B cell (primary cell): ENCODE measurements at regions of chr12 and their contacts with region 1.

Region 1: GRCh38 chr12:53379389-53380103 is 430 bp upstream of the SP1 start:
- DNase-seq: peak; percentile 99
- ATAC-seq: peak; percentile 70
- H3K4me3 ChIP-seq: peak overlapping the region; percentile 60 to 93 (median 64)
- H3K4me3 Mint-ChIP-seq: no peak overlapping the region
- H3K27ac ChIP-seq: peak overlapping the region; percentile 76 to 89
- H3K27ac Mint-ChIP-seq: no peak overlapping the region
- H3K4me1 ChIP-seq: peaks cover 39 to 46% of the 10 kb centered on the region in 2 donors
- H3K4me1 Mint-ChIP-seq: peaks cover 33% of the 10 kb centered on the region
- H3K27me3 ChIP-seq: no peaks in the 10 kb centered on the region
- H3K27me3 Mint-ChIP-seq: no peaks in the 10 kb centered on the region
- CTCF ChIP-seq: no peak

Region 2: DNA sequence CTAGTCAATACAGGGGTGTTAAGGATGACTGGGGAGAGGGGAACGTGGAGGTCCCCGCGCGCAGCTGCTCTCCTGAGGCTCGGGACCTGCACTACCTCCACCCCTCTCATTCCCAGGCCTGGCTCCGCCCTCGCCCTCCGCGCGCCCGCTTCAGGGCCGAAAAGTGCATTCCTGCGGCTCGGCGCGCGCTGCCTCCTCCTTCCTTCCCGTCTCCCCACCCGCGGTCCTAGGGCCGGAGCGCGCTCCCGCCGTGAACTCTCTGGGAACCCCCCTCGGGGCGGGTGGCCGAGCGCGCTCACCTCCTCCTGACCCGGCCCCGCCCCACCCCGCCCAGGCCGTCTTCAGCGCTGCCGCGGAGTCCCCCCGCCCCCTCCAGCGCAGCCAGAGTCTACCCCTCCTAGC is 158.7 kb before region 1 on chr12:
- CTCF ChIA-PET with region 1: no interaction called
- POLR2A ChIA-PET with region 1: interaction called, 6 read pairs
- intact Hi-C with region 1: loop called (anchors 2 kb)
- DNase-seq: peak; percentile 92
- ATAC-seq: peak; percentile 76
- H3K4me3 ChIP-seq: peak overlapping the region; percentile 63 to 100 (median 90)
- H3K4me3 Mint-ChIP-seq: peak overlapping the region; percentile 97
- H3K27ac ChIP-seq: peak overlapping the region; percentile 93 to 95
- H3K27ac Mint-ChIP-seq: peak overlapping the region; percentile 98
- H3K4me1 ChIP-seq: peaks cover 39 to 56% of the 10 kb centered on the region in 2 donors
- H3K4me1 Mint-ChIP-seq: peaks cover 53% of the 10 kb centered on the region
- H3K27me3 ChIP-seq: no peaks in the 10 kb centered on the region
- H3K27me3 Mint-ChIP-seq: no peaks in the 10 kb centered on the region
- CTCF ChIP-seq: no peak

Region 3: GRCh38 chr12:53365245-53365904 is 14.2 kb before region 1 on chr12:
- CTCF ChIA-PET with region 1: interaction called, 6 read pairs
- POLR2A ChIA-PET with region 1: interaction called, 11 read pairs
- intact Hi-C with region 1: no loop called
- DNase-seq: no peak
- ATAC-seq: no peak
- H3K4me3 ChIP-seq: no peak overlapping the region
- H3K4me3 Mint-ChIP-seq: peak overlapping the region; percentile 75
- H3K27ac ChIP-seq: peak overlapping the region in 1 of 2 donors; percentile 28
- H3K27ac Mint-ChIP-seq: peak overlapping the region; percentile 84
- H3K4me1 ChIP-seq: peaks cover 12 to 17% of the 10 kb centered on the region in 2 donors
- H3K4me1 Mint-ChIP-seq: peaks cover 13% of the 10 kb centered on the region
- H3K27me3 ChIP-seq: no peaks in the 10 kb centered on the region
- H3K27me3 Mint-ChIP-seq: no peaks in the 10 kb centered on the region
- CTCF ChIP-seq: no peak

Region 4: DNA sequence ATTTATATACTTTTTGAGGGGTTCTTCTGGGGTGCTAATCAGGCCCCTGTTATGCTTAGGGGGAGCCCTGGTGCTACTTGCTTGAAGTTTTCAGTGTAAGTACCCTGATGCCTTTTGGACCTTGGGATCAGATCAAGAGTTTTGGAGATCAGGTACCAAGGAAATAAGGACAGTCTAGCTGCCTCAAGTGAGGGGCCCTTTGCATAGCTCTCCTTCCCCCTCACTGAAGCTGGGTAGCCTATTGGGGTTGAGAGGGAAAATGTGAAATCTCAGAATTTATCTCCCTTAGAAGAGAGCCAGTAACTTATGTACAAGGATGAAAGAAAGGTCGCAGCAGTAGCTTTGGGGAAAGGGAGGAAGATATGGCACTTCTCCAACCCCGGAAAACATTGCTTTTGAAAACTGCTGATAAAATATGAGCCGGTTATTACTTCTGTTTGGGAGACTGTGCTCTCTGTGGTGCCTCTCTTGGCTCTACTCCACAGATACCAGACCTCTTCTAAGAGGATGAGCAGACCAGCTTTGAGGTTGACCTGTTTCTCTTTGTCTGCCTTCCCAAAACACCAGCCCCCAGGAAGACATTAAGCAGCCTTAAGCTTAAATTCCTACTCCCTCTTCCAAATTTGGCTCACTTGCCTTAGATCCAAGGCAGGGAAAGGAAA is 35.3 kb after region 1 on chr12:
- CTCF ChIA-PET with region 1: interaction called, 10 read pairs
- POLR2A ChIA-PET with region 1: no interaction called
- intact Hi-C with region 1: loop called (anchors 1 kb)
- DNase-seq: no peak
- ATAC-seq: no peak
- H3K4me3 ChIP-seq: no peak overlapping the region
- H3K4me3 Mint-ChIP-seq: no peak overlapping the region
- H3K27ac ChIP-seq: no peak overlapping the region
- H3K27ac Mint-ChIP-seq: peak overlapping the region; percentile 46
- H3K4me1 ChIP-seq: peaks cover 24 to 29% of the 10 kb centered on the region in 2 donors
- H3K4me1 Mint-ChIP-seq: peaks cover 57% of the 10 kb centered on the region
- H3K27me3 ChIP-seq: no peaks in the 10 kb centered on the region
- H3K27me3 Mint-ChIP-seq: no peaks in the 10 kb centered on the region
- CTCF ChIP-seq: no peak

Region 5: GRCh38 chr12:53441040-53441833 is 61.7 kb after region 1 on chr12 and contains the start of gene PRR13:
- CTCF ChIA-PET with region 1: interaction called, 3 read pairs
- POLR2A ChIA-PET with region 1: interaction called, 3 read pairs
- intact Hi-C with region 1: loop called (anchors 2 kb)
- DNase-seq: peak; percentile 98
- ATAC-seq: peak; percentile 97
- H3K4me3 ChIP-seq: peak within 1 kb of the TSS; percentile 85 to 99 (median 94)
- H3K4me3 Mint-ChIP-seq: peak within 1 kb of the TSS; percentile 97
- H3K27ac ChIP-seq: peak within 1 kb of the TSS; percentile 62 to 93
- H3K27ac Mint-ChIP-seq: peak within 1 kb of the TSS; percentile 99
- H3K4me1 ChIP-seq: peaks cover 21 to 25% of the 10 kb centered on the region in 2 donors
- H3K4me1 Mint-ChIP-seq: peaks cover 40% of the 10 kb centered on the region
- H3K27me3 ChIP-seq: no peaks in the 10 kb centered on the region
- H3K27me3 Mint-ChIP-seq: no peaks in the 10 kb centered on the region
- CTCF ChIP-seq: no peak
- total RNA-seq, gene PRR13: 200 and 213 TPM in 2 replicates

Region 6: DNA sequence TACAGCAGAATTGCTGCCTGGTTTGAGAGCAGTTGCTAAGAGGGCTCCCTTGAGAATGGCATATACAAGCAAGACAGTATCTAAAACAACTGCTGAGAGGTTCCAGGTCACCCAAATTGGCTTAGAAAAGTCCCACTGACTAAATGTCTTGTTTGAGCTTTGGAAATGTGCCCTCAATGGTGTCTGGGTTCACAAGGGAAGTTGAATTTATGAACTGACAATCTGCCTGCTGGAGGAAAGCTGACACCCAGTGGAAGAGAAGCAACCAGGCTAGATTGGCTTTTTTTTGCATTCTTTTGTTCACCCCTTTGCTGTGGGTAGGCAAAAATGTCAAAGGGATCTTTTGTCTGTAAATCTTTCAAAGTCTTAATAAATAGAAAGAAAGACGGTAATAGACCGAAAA is 172.3 kb after region 1 on chr12:
- CTCF ChIA-PET with region 1: no interaction called
- POLR2A ChIA-PET with region 1: no interaction called
- intact Hi-C with region 1: no loop called
- DNase-seq: no peak
- ATAC-seq: no peak
- H3K4me3 ChIP-seq: no peak overlapping the region
- H3K4me3 Mint-ChIP-seq: no peak overlapping the region
- H3K27ac ChIP-seq: no peak overlapping the region
- H3K27ac Mint-ChIP-seq: no peak overlapping the region
- H3K4me1 ChIP-seq: no peaks in the 10 kb centered on the region
- H3K4me1 Mint-ChIP-seq: no peaks in the 10 kb centered on the region
- H3K27me3 ChIP-seq: no peaks in the 10 kb centered on the region
- H3K27me3 Mint-ChIP-seq: no peaks in the 10 kb centered on the region
- CTCF ChIP-seq: no peak

Region 7: GRCh38 chr12:53625946-53626701 is 246.6 kb after region 1 on chr12 and contains the start of gene ATF7:
- CTCF ChIA-PET with region 1: no interaction called
- POLR2A ChIA-PET with region 1: interaction called, 3 read pairs
- intact Hi-C with region 1: loop called (anchors 2 kb)
- DNase-seq: peak; percentile 99
- ATAC-seq: peak; percentile 93
- H3K4me3 ChIP-seq: peak within 1 kb of the TSS; percentile 60 to 91 (median 74)
- H3K4me3 Mint-ChIP-seq: peak within 1 kb of the TSS; percentile 91
- H3K27ac ChIP-seq: peak within 1 kb of the TSS; percentile 77 to 88
- H3K27ac Mint-ChIP-seq: peak within 1 kb of the TSS; percentile 98
- H3K4me1 ChIP-seq: peaks cover 24 to 29% of the 10 kb centered on the region in 2 donors
- H3K4me1 Mint-ChIP-seq: peaks cover 46% of the 10 kb centered on the region
- H3K27me3 ChIP-seq: no peaks in the 10 kb centered on the region
- H3K27me3 Mint-ChIP-seq: no peaks in the 10 kb centered on the region
- CTCF ChIP-seq: no peak
- total RNA-seq, gene ATF7: 42.2 and 42.9 TPM in 2 replicates